HEK293 (cell line): ENCODE measurements at regions of chr11 and their contacts with region 1.

Region 1: GRCh38 chr11:108733479-108734116 is 68.7 kb downstream of the DDX10 start:
- H3K4me3 ChIP-seq: no peak overlapping the region
- H3K27ac ChIP-seq: no peak overlapping the region
- H3K4me1 ChIP-seq: no peaks in the 10 kb centered on the region
- CTCF ChIP-seq: no peak

Region 2: DNA sequence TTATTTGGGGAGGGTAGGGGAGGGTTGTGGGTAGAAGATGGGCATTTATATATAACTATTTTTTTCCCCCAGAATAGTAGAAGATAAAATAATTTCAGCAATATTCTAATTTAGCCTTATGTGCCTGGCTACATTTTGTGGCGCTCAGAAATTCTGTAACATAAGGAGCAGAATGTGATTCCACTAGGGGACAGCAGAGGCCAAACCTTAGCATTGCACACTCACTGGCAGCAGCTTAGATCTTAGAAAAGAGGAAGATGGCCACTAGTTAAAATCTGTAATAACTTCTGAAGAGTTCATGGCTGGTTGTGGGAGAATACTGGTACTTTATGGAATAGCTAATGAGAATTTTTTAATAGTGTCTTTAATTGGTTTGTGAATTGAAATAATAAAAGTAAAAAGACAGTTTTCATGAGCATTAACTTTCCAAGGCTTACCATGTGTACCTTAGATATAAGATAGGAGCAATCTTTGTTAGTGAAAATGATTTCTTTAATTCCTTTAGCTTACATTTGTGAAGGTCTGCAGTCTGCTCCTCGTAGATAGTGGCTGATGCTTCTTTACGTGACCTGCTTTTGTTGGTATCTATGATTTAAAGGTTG is 35.6 kb before region 1 on chr11:
- CTCF ChIA-PET with region 1: interaction called, 23 read pairs
- POLR2A ChIA-PET with region 1: no interaction called
- H3K4me3 ChIP-seq: no peak overlapping the region
- H3K27ac ChIP-seq: no peak overlapping the region
- H3K4me1 ChIP-seq: no peaks in the 10 kb centered on the region
- CTCF ChIP-seq: peak; percentile 57

Region 3: DNA sequence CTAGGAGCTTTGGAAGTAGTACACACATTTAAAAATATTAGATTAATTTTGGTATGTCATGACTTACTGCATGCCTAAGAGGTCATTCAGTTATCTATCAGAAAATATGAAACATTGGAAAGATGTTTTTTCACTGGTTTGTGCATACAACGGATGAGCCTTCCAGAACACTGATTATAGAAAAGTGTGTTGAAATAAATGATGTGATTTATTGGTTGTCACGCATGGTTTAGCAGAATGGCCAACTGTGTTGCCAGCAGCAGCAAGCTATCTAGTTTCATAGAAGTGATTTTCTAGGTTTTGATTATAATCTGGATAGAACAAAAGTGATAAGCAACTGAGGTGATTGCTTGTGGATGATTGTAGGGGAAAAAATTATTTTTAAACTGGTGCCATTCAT is 15.1 kb before region 1 on chr11:
- CTCF ChIA-PET with region 1: interaction called, 18 read pairs
- POLR2A ChIA-PET with region 1: no interaction called
- H3K4me3 ChIP-seq: no peak overlapping the region
- H3K27ac ChIP-seq: no peak overlapping the region
- H3K4me1 ChIP-seq: no peaks in the 10 kb centered on the region
- CTCF ChIP-seq: no peak

Region 4: DNA sequence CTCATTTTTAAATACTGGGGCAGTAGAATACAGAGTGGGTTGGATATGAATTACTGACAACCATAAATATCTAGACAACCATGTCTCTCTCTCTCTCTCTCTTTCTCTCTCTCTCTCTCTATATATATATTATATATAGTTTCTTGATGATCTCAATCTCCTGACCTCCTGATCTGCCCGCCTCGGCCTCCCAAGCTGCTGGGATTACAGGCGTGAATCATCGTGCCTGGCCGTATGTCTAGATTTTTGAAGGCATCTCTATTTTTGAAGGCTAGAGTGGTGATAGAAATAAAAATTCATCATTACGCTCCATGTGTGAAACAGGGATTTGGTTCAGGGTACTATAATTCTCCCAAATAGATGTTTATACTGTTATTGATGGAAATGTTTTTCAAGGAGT is 15.4 kb after region 1 on chr11:
- CTCF ChIA-PET with region 1: interaction called, 14 read pairs
- POLR2A ChIA-PET with region 1: no interaction called
- H3K4me3 ChIP-seq: no peak overlapping the region
- H3K27ac ChIP-seq: no peak overlapping the region
- H3K4me1 ChIP-seq: no peaks in the 10 kb centered on the region
- CTCF ChIP-seq: no peak